ENCODE measurements at regions of chr16 and their contacts with region 1.

Region 1: GRCh38 chr16:22424161-22424937 is 49.9 kb upstream of the CDR2 start:
- DNase-seq: peak; percentile 64 to 79 (median 71)
- H3K4me3 ChIP-seq: no peak overlapping the region
- H3K27ac ChIP-seq: peak overlapping the region; percentile 11 to 62
- H3K4me1 ChIP-seq: peaks cover 19% of the 10 kb centered on the region
- H3K27me3 ChIP-seq: no peaks in the 10 kb centered on the region
- CTCF ChIP-seq: no peak
- EP300 ChIP-seq: no peak
- POLR2A ChIP-seq: no peak

Region 2: DNA sequence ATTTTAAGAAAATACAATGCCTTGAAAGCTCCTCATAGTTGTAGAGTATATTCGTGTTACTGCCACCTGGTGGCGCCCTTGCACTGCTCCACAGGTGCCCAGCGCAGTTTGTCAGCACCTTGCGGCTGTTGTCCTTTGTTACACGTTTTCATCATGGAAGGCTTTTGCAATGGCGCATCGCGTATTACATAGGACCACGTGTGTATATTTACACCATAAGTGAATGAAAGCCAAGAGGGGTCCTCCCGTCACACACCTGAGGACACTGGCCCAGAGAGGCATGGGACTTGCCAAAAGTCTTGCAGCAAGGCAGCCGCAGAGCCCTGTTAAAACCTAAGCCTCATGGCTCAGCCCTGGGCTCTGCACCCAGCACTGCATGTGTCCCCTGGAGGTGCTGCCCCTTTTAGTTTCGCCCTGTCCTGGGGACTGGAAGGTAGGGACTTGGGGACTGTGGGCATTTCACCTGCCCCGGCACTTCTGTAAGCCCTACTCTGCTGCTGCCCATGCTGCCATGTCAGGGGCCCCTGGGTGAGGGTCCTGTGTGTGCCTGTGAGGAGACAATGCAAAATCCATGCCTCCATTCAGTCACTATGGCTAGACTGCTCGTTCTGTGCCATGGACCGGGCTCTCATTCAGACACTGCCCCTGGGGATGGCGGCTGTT is 102.9 kb before region 1 on chr16:
- intact Hi-C with region 1: loop called in 1 of 4 experiments (anchors 10 kb)
- DNase-seq: peak; percentile 58 to 82 (median 68)
- H3K4me3 ChIP-seq: no peak overlapping the region
- H3K27ac ChIP-seq: no peak overlapping the region
- H3K4me1 ChIP-seq: peaks cover 2% of the 10 kb centered on the region
- H3K27me3 ChIP-seq: no peaks in the 10 kb centered on the region
- CTCF ChIP-seq: peak; percentile 77 to 87 (median 86)
- EP300 ChIP-seq: no peak
- POLR2A ChIP-seq: no peak

Region 3: DNA sequence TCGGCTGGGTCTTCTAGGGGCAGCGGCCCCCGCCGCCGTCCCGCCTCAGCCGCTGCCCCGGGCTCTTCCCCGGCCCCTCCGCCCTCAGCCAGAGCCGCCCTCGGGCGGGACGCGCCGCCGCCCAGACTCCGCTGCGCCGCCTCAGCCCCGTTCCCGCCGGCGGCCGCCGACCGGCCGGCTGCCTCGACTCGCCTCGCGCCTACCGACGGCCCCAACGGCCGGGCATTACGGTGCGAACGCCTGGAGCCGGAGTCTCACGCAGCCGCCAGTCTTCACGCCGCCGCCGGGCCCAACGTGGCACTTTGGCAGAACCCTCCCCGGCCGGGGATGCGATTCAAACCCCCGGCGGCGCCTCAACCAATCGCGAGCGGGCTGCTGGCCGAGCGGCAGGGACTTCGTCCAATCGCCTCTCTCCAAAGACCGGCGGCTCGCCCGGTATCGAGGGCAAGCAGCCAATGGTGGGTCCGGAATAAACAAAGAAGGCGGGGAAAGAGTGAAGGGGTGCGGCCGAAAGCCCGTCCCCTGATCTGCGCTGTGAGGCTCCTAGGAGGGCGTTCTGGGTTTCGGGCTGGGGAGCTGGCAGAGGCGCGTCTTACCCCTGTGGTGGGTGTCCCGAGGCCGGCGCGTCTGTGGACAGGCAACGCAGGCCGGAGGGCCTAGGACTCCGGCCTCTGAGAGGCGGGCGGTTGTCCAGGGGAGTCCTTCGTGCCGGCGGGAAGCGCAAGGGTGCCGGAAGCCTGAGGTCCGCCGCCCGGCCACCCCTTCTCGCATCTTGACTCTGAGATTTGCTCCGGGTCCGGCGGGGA is 49.8 kb before region 1 on chr16 and contains the start of gene CDR2:
- intact Hi-C with region 1: loop called in 3 of 4 experiments (anchors 5 to 10 kb)
- DNase-seq: peak; percentile 98 to 99 (median 99)
- H3K4me3 ChIP-seq: peak within 1 kb of the TSS; percentile 87
- H3K27ac ChIP-seq: peak within 1 kb of the TSS; percentile 64 to 70
- H3K4me1 ChIP-seq: peaks cover 5% of the 10 kb centered on the region
- H3K27me3 ChIP-seq: no peaks in the 10 kb centered on the region
- CTCF ChIP-seq: no peak
- EP300 ChIP-seq: no peak
- POLR2A ChIP-seq: peak; percentile 78
- total RNA-seq, gene CDR2: 14.3 to 30.3 (median 23.7) TPM

Region 4: DNA sequence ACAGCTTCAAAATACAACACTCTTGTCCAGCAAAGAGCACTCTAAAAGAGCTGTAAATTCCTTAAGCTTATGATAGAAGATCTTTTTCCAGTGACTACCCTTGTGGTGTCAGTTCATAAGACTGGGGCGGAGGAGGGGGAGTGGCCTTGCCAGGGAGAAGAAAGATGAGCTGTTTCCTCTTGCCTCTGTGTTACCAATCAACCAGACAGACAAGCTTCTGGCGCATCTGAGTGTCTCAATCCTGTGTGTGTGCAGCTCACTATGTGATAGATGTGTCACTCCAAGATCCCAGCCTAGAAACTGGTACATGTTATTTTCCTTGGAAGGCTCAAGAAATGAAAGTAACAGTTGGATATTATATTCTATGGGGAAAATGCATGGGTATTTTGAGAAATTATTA is 1664.4 kb after region 1 on chr16:
- intact Hi-C with region 1: no loop called
- DNase-seq: no peak
- H3K4me3 ChIP-seq: no peak overlapping the region
- H3K27ac ChIP-seq: no peak overlapping the region
- H3K4me1 ChIP-seq: no peaks in the 10 kb centered on the region
- H3K27me3 ChIP-seq: no peaks in the 10 kb centered on the region
- CTCF ChIP-seq: no peak
- EP300 ChIP-seq: no peak
- POLR2A ChIP-seq: no peak